ENCODE measurements at regions of chr3 and their contacts with region 1.

Region 1: GRCh38 chr3:42012935-42013690 is 51.2 kb upstream of the ULK4 start:
- DNase-seq: peak; percentile 73
- ATAC-seq: peak; percentile 68
- H3K4me3 Mint-ChIP-seq: peak overlapping the region; percentile 97
- H3K27ac Mint-ChIP-seq: peak overlapping the region; percentile 99
- H3K4me1 Mint-ChIP-seq: peaks cover 59% of the 10 kb centered on the region
- H3K27me3 Mint-ChIP-seq: no peaks in the 10 kb centered on the region
- CTCF ChIP-seq: no peak

Region 2: GRCh38 chr3:40309418-40309924 is 1703.6 kb before region 1 on chr3 and contains the start of gene EIF1B:
- CTCF ChIA-PET with region 1: no interaction called
- POLR2A ChIA-PET with region 1: no interaction called
- intact Hi-C with region 1: loop called (anchors 2 kb)
- DNase-seq: peak; percentile 99
- ATAC-seq: peak; percentile 88
- H3K4me3 Mint-ChIP-seq: peak within 1 kb of the TSS; percentile 99
- H3K27ac Mint-ChIP-seq: peak within 1 kb of the TSS; percentile 99
- H3K4me1 Mint-ChIP-seq: peaks cover 35% of the 10 kb centered on the region
- H3K27me3 Mint-ChIP-seq: no peaks in the 10 kb centered on the region
- CTCF ChIP-seq: no peak
- total RNA-seq, gene EIF1B: 62.0 and 65.5 TPM in 2 replicates

Region 3: DNA sequence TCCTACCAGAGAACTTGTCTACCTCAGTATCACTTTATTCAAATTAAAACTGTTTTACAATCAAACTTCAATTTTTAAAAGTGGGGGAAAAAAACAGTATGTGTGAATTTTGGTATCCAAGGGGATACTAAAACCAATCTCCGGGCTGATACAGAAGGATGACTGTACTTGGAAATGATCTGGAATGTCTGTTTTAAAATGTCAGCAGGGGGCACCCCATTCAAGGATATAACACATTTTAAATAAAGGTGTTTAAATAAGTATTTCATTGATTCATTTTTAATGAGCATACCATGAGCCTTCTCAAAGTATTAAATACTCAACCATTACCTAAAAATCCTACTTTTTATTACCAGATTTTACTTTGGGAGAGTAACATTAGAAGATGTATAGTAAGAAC is 119.1 kb before region 1 on chr3:
- CTCF ChIA-PET with region 1: no interaction called
- POLR2A ChIA-PET with region 1: interaction called, 4 read pairs
- intact Hi-C with region 1: loop called (anchors 5 kb)
- DNase-seq: no peak
- ATAC-seq: no peak
- H3K4me3 Mint-ChIP-seq: no peak overlapping the region
- H3K27ac Mint-ChIP-seq: no peak overlapping the region
- H3K4me1 Mint-ChIP-seq: no peaks in the 10 kb centered on the region
- H3K27me3 Mint-ChIP-seq: no peaks in the 10 kb centered on the region
- CTCF ChIP-seq: no peak

Region 4: DNA sequence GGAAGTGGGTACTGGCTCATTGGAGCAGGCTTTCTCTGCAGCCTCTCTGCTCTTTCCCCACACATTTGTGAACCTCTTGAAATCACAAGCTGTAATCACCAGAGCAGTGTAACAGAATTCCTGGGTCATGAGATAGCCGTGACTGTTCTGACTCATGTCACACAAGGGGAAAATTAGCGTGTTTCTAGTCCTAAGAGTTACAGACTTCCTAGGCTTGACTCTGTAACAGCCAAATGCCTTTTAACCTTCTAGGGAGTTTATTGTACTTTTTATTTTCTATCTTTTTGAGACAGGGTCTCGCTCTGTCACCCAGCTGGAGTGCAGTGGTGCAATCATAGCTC is 23.3 kb after region 1 on chr3:
- CTCF ChIA-PET with region 1: interaction called, 3 read pairs
- POLR2A ChIA-PET with region 1: interaction called, 13 read pairs
- intact Hi-C with region 1: no loop called
- DNase-seq: no peak
- ATAC-seq: peak; percentile 51
- H3K4me3 Mint-ChIP-seq: peak overlapping the region; percentile 55
- H3K27ac Mint-ChIP-seq: peak overlapping the region; percentile 86
- H3K4me1 Mint-ChIP-seq: peaks cover 90% of the 10 kb centered on the region
- H3K27me3 Mint-ChIP-seq: no peaks in the 10 kb centered on the region
- CTCF ChIP-seq: no peak

Region 5: DNA sequence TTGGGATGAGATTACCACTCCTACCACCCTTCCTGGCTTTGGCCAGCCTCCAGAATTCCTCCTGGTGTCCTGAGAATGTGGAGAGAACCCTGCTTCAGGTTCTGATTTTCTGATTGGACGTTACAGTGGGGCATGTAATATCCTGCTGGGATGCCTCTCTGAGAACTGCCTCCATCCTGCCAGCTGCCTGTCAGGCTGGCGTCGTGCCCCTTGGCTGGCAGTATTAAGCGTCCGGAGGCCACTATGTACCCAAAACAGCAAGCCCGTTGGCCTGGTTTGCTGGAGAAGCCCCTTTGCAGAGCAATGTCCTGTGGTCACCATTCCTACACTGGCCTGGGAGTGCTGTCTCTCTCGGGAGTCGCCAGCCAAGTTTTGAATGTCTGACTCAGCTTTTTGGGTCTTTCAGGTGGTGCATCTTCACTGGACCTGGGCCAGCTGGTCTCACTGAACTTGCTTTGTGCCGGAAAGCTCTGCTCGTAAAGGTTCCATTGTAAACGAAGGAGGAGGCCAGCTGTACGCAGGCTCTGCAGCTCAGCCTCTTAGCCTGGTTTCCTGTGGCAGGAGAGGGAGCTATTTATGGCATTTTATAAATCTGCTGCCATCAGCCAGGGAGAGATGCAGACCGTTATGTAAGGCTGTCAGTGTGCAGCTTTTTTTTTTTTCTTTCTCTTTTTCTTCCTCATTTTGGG is 58.9 kb after region 1 on chr3:
- CTCF ChIA-PET with region 1: interaction called, 4 read pairs
- POLR2A ChIA-PET with region 1: interaction called, 34 read pairs
- intact Hi-C with region 1: loop called (anchors 1 kb)
- DNase-seq: no peak
- ATAC-seq: no peak
- H3K4me3 Mint-ChIP-seq: peak overlapping the region; percentile 44
- H3K27ac Mint-ChIP-seq: peak overlapping the region; percentile 80
- H3K4me1 Mint-ChIP-seq: peaks cover 86% of the 10 kb centered on the region
- H3K27me3 Mint-ChIP-seq: no peaks in the 10 kb centered on the region
- CTCF ChIP-seq: no peak

Region 6: GRCh38 chr3:42090973-42091731 is 78.0 kb after region 1 on chr3 and contains the start of gene TRAK1:
- CTCF ChIA-PET with region 1: interaction called, 5 read pairs
- POLR2A ChIA-PET with region 1: interaction called, 24 read pairs
- intact Hi-C with region 1: loop called (anchors 1 kb)
- DNase-seq: no peak
- ATAC-seq: no peak
- H3K4me3 Mint-ChIP-seq: peak within 1 kb of the TSS; percentile 29
- H3K27ac Mint-ChIP-seq: peak within 1 kb of the TSS; percentile 86
- H3K4me1 Mint-ChIP-seq: peaks cover 82% of the 10 kb centered on the region
- H3K27me3 Mint-ChIP-seq: no peaks in the 10 kb centered on the region
- CTCF ChIP-seq: no peak
- total RNA-seq, gene TRAK1: 54.5 and 58.4 TPM in 2 replicates

Region 7: DNA sequence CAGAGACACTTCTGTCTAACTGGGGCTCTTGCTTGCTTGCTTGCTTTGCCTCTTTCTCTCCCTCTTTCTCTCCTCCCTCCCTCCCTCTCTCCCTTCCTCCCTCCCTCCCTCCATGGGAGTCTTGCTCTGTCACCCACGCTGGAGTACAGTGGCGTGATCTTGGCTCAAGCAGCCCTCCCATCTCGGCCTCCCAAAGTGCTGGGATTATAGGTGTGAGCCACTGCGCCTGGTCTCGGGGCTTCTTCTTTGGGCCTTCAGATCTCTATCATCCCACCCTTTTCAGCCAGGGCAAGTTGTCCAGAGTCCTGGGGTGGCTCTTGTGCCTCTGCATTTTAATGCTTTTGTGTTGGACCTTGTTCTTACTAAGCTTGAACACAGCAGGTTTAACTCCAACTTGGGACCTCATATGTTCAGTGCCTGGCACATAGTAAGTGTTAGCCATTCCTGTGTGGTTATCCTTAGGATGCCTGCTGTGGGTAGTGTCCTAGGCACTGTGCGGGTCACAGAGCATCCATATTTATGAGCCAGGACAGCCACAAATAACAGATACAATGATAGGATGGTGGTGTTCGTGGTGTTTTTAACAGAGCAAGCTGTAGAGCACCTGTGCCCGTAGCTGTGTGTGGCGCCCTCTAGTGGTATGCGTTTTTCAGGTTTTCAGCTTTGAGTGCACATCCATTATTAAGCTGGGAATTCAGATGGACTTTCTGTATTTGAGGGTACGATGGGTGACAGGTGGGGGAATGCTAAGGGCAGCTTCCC is 177.8 kb after region 1 on chr3:
- CTCF ChIA-PET with region 1: no interaction called
- POLR2A ChIA-PET with region 1: interaction called, 3 read pairs
- intact Hi-C with region 1: loop called (anchors 5 kb)
- DNase-seq: peak; percentile 40
- ATAC-seq: peak; percentile 52
- H3K4me3 Mint-ChIP-seq: peak overlapping the region; percentile 28
- H3K27ac Mint-ChIP-seq: peak overlapping the region; percentile 63
- H3K4me1 Mint-ChIP-seq: peaks cover 44% of the 10 kb centered on the region
- H3K27me3 Mint-ChIP-seq: no peaks in the 10 kb centered on the region
- CTCF ChIP-seq: peak; percentile 51

Measured in activated B cell treated with CpG ODN at 0.5 μM for 24 hours (primary cell).